ENCODE measurements at regions of chr19 and their contacts with region 1.

Region 1: DNA sequence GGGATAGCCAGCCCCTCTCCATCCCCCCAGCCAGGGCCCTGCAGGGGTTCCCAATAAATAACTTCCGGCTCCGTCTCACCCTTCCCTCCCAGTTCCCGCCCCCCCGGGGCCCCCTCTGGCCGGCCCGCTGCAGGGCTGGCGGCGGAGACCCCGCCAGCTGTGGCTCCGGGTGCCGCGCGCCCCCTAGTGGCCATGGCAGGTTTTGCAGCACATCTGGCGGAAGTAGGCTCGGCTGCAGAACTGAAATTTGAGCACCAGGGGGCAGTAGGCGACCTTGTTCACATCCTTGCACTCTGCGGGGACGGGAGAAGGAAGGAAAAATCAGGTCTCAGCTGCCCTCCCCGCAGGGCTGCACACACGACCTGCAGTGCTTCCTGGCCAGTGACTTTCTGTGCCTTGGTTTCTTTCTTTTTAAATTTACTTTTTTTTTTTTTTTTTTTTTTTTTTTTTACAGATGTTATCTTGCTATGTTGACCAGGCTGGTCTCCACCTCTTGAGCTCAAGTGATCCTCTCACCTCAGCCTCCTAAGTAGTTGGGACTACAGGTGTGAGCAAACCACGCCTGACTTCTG is 3.6 kb upstream of the MYO1F start:
- DNase-seq: peak; percentile 91
- ATAC-seq: peak; percentile 52
- H3K4me3 Mint-ChIP-seq: no peak overlapping the region
- H3K27ac Mint-ChIP-seq: no peak overlapping the region
- H3K4me1 Mint-ChIP-seq: peaks cover 24% of the 10 kb centered on the region
- H3K27me3 Mint-ChIP-seq: peaks cover 4% of the 10 kb centered on the region

Region 2: DNA sequence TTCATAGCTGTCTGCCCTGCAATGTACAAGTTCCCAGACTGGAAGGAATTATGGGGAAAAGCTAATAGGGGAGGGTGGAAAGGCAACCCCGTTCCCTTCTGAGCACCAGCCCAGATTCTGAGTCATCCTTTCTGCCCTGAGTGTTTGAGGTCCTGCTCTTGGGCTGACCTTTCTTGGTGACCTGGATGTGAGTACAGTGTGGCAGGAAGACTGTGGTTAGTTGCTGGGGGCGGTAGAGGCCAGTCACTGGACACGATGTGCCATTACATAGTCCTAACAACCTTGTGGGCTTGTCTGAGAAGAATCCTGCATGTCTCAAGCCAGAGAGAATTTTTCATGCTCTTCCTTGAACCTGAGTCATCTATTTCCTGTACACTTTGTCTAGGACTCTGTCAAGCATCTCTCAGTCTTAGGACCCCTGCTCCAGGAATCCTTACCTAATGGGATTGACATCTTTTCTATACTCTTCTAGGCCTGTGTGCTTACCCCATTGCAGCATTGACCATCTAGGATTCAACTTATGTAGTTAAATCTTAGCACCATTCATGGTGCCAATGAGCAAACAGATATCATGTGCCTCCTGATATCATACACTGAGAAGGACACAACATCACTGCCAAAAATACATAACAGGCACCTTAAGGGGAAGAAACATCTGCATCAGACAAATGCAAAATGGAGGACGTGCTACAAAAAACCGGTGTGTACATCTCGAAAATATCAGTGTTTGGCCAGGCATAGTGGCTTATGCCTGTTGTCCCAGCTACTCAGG is 225.0 kb before region 1 on chr19:
- CTCF ChIA-PET with region 1: interaction called, 36 read pairs
- POLR2A ChIA-PET with region 1: no interaction called
- DNase-seq: no peak
- ATAC-seq: no peak
- H3K4me3 Mint-ChIP-seq: no peak overlapping the region
- H3K27ac Mint-ChIP-seq: no peak overlapping the region
- H3K4me1 Mint-ChIP-seq: peaks cover 9% of the 10 kb centered on the region
- H3K27me3 Mint-ChIP-seq: peaks cover 7% of the 10 kb centered on the region

Region 3: DNA sequence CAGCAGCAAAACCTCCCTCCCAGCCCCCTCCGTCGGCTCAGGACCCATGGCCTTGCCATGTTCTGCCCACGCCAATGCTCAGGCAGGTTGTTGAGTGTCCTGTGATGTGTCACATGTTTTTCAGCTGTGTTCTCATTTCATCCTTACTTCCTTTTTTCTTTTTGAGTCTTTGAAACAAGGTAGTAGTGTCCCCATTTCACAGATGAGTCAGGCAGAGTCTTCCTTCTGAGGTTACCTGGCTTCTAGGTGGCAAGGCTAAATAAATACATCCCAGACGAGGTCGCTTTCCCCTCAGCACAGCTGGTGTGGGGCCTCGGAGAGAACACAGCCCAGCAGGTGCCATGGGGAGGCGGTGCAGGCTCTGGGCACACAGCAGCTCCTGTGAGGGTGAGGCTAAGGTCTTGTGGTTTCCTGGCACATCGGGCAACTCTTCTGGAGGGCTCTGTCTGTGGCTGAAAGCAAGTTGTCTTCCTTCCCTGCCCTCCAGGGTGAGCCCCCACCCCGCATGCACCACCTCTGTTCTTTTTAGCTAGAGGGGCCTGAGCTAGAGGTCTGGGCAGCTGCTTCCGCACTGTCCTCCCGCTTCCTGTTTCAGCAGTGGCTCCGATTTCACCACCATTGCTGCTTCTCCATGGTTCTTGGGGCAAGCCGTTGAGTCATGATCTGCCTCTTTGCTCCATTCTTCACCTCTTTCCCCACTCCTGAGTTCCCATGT is 93.5 kb before region 1 on chr19:
- CTCF ChIA-PET with region 1: interaction called, 82 read pairs
- POLR2A ChIA-PET with region 1: interaction called, 3 read pairs
- DNase-seq: peak; percentile 80
- ATAC-seq: peak; percentile 86
- H3K4me3 Mint-ChIP-seq: peak overlapping the region; percentile 35
- H3K27ac Mint-ChIP-seq: peak overlapping the region; percentile 90
- H3K4me1 Mint-ChIP-seq: peaks cover 48% of the 10 kb centered on the region
- H3K27me3 Mint-ChIP-seq: no peaks in the 10 kb centered on the region

Region 4: GRCh38 chr19:8513687-8514504 is 66.9 kb before region 1 on chr19 and contains the start of gene ZNF414:
- CTCF ChIA-PET with region 1: interaction called, 104 read pairs
- POLR2A ChIA-PET with region 1: interaction called, 45 read pairs
- DNase-seq: peak; percentile 97
- ATAC-seq: peak; percentile 81
- H3K4me3 Mint-ChIP-seq: peak within 1 kb of the TSS; percentile 86
- H3K27ac Mint-ChIP-seq: peak within 1 kb of the TSS; percentile 97
- H3K4me1 Mint-ChIP-seq: peaks cover 62% of the 10 kb centered on the region
- H3K27me3 Mint-ChIP-seq: no peaks in the 10 kb centered on the region
- total RNA-seq, gene ZNF414: 28.7 to 36.2 TPM

Region 5: GRCh38 chr19:8557642-8558238 is 23.1 kb before region 1 on chr19:
- CTCF ChIA-PET with region 1: interaction called, 23 read pairs
- POLR2A ChIA-PET with region 1: no interaction called
- DNase-seq: no peak
- ATAC-seq: no peak
- H3K4me3 Mint-ChIP-seq: no peak overlapping the region
- H3K27ac Mint-ChIP-seq: peak overlapping the region; percentile 77
- H3K4me1 Mint-ChIP-seq: peaks cover 35% of the 10 kb centered on the region
- H3K27me3 Mint-ChIP-seq: no peaks in the 10 kb centered on the region

Region 6: DNA sequence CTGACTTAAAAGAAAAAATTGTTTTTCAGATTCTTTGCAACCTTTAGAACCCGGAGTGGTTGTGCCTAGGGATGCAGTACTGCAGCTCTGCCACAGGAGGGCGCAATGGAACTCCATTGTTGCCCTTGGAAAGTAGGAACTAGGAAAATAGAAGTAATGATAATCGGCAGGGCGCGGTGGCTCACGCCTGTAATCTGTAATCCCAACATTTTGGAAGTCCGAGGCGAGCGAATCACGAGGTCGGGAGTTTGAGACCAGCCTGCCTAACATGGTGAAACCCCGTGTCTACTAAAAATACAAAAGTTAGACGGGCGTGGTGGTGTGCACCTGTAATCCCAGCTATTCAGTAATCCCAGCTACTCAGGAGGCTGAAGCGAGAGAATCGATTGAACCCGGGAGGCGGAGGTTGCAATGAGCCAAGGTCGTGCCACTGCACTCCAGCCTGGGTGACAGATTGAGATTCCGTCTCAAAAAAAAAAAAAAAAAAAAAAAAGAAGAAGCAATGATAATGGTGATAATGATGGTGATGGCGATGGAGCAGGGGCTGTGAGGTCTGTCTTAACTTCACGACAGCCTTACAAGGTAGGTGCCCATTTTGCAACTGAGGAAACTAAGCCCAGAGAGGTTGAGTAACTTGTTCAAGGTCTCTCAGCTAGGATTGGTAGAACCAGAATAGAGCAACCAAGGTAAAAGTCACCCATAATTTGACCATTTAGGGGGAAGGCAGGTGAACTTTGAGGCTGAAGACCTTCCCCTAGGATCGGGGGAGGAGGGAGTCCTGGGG is 35.2 kb after region 1 on chr19:
- CTCF ChIA-PET with region 1: interaction called, 17 read pairs
- POLR2A ChIA-PET with region 1: no interaction called
- DNase-seq: peak; percentile 65
- ATAC-seq: no peak
- H3K4me3 Mint-ChIP-seq: no peak overlapping the region
- H3K27ac Mint-ChIP-seq: peak overlapping the region; percentile 49
- H3K4me1 Mint-ChIP-seq: peaks cover 17% of the 10 kb centered on the region
- H3K27me3 Mint-ChIP-seq: peaks cover 5% of the 10 kb centered on the region

Region 7: DNA sequence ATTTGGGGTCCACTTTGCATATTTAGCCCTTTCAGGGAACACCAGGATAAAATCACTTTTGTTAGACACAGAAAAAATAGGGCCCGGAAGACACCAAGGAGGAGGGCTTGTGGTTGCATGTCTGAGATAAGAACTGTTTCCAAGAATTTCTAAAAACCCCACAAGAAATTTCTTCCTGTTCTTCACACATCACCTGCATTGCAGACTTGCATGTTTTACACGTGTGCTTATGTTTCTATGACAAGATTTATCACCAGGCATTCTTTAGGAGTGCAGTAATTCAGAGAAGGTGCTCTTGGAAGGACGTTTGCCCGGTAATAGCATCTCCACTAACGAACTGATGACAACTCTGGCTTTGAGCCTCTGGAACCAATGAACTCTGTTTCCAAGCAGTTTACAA is 124.9 kb after region 1 on chr19:
- CTCF ChIA-PET with region 1: no interaction called
- POLR2A ChIA-PET with region 1: no interaction called
- DNase-seq: peak; percentile 56
- ATAC-seq: peak; percentile 66
- H3K4me3 Mint-ChIP-seq: peak overlapping the region; percentile 62
- H3K27ac Mint-ChIP-seq: peak overlapping the region; percentile 91
- H3K4me1 Mint-ChIP-seq: peaks cover 65% of the 10 kb centered on the region
- H3K27me3 Mint-ChIP-seq: peaks cover 2% of the 10 kb centered on the region

Region 8: DNA sequence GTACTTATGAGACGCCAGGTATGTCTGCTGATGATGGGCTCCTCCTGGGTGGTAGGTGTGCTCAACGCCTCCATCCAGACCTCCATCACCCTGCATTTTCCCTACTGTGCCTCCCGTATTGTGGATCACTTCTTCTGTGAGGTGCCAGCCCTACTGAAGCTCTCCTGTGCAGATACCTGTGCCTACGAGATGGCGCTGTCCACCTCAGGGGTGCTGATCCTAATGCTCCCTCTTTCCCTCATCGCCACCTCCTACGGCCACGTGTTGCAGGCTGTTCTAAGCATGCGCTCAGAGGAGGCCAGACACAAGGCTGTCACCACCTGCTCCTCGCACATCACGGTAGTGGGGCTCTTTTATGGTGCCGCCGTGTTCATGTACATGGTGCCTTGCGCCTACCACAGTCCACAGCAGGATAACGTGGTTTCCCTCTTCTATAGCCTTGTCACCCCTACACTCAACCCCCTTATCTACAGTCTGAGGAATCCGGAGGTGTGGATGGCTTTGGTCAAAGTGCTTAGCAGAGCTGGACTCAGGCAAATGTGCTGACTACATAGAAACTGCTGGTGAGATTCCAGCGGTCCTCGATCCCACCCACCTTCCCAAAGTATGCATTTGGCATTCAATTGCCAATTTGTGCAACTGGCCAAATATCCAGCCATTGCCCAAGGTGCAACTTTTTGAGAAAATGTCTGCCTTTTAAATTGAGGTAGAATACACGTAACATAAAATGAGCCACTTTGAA is 150.8 kb after region 1 on chr19:
- CTCF ChIA-PET with region 1: no interaction called
- POLR2A ChIA-PET with region 1: no interaction called
- DNase-seq: peak; percentile 49
- ATAC-seq: no peak
- H3K4me3 Mint-ChIP-seq: no peak overlapping the region
- H3K27ac Mint-ChIP-seq: no peak overlapping the region
- H3K4me1 Mint-ChIP-seq: no peaks in the 10 kb centered on the region
- H3K27me3 Mint-ChIP-seq: peaks cover 7% of the 10 kb centered on the region

Measured in activated CD8-positive, alpha-beta T cell treated with anti-CD3 and anti-CD28 coated beads, Interleukin-2, amount 10 ng/mL, durations not matched to agents 7 days and 5 days (primary cell).